IMR-90 (cell line): ENCODE measurements at regions of chr5 and their contacts with region 1.

Region 1: GRCh38 chr5:76256116-76256889 is 146.8 kb upstream of the IQGAP2 start:
- DNase-seq: peak; percentile 66
- ATAC-seq: peak; percentile 100
- H3K4me3 ChIP-seq: no peak overlapping the region
- H3K27ac ChIP-seq: no peak overlapping the region
- H3K4me1 ChIP-seq: no peaks in the 10 kb centered on the region
- H3K27me3 ChIP-seq: peaks cover 2% of the 10 kb centered on the region; the same call in 1 of the 2 replicates
- CTCF ChIP-seq: peak; percentile 65
- POLR2A ChIP-seq: no peak
- RAD21 ChIP-seq: peak; percentile 74

Region 2: GRCh38 chr5:74927336-74927735 is 1329.0 kb before region 1 on chr5:
- CTCF ChIA-PET with region 1: no interaction called
- POLR2A ChIA-PET with region 1: no interaction called
- dilution Hi-C with region 1: no loop called
- in situ Hi-C with region 1: no loop called
- intact Hi-C with region 1: loop called (anchors 5 kb)
- DNase-seq: no peak
- ATAC-seq: no peak
- H3K4me3 ChIP-seq: no peak overlapping the region
- H3K27ac ChIP-seq: no peak overlapping the region
- H3K4me1 ChIP-seq: peaks cover 3% of the 10 kb centered on the region
- H3K27me3 ChIP-seq: no peaks in the 10 kb centered on the region
- CTCF ChIP-seq: no peak
- POLR2A ChIP-seq: no peak
- RAD21 ChIP-seq: no peak

Region 3: GRCh38 chr5:75734913-75735789 is 521.2 kb before region 1 on chr5:
- CTCF ChIA-PET with region 1: no interaction called
- POLR2A ChIA-PET with region 1: no interaction called
- dilution Hi-C with region 1: no loop called
- in situ Hi-C with region 1: no loop called
- intact Hi-C with region 1: loop called (anchors 1 kb)
- DNase-seq: peak; percentile 4
- ATAC-seq: no peak
- H3K4me3 ChIP-seq: no peak overlapping the region
- H3K27ac ChIP-seq: no peak overlapping the region
- H3K4me1 ChIP-seq: no peaks in the 10 kb centered on the region
- H3K27me3 ChIP-seq: no peaks in the 10 kb centered on the region; the same call in 1 of the 2 replicates
- CTCF ChIP-seq: peak; percentile 18; the same call in 1 of the 2 replicates
- POLR2A ChIP-seq: no peak
- RAD21 ChIP-seq: peak; percentile 29; the same call in 1 of the 2 replicates

Region 4: DNA sequence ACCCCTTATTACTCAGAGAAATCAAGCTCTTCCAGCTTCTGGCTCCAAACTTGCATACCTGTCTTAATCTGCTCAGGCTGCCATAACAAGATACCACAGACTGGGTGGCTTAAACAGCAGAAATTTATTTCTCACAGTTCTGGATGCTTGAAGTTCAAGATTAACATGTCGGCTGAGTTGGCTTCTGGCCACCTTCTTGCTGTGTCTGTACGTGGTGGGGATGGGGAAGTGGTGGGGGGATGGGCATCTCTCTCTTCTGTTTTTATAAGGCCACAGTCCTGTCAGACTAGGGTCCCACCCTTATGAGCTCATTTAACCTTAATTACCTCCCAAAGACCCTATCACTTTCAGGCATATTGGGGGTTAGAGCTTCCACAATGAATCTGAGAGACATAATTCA is 32.6 kb before region 1 on chr5:
- CTCF ChIA-PET with region 1: no interaction called
- POLR2A ChIA-PET with region 1: no interaction called
- dilution Hi-C with region 1: no loop called
- in situ Hi-C with region 1: no loop called
- intact Hi-C with region 1: no loop called
- DNase-seq: no peak
- ATAC-seq: no peak
- H3K4me3 ChIP-seq: no peak overlapping the region
- H3K27ac ChIP-seq: no peak overlapping the region
- H3K4me1 ChIP-seq: no peaks in the 10 kb centered on the region
- H3K27me3 ChIP-seq: no peaks in the 10 kb centered on the region
- CTCF ChIP-seq: no peak
- POLR2A ChIP-seq: no peak
- RAD21 ChIP-seq: no peak

Region 5: GRCh38 chr5:76457674-76458485 is 201.6 kb after region 1 on chr5:
- CTCF ChIA-PET with region 1: no interaction called
- POLR2A ChIA-PET with region 1: no interaction called
- dilution Hi-C with region 1: no loop called
- in situ Hi-C with region 1: no loop called
- intact Hi-C with region 1: no loop called
- DNase-seq: no peak
- ATAC-seq: no peak
- H3K4me3 ChIP-seq: no peak overlapping the region
- H3K27ac ChIP-seq: no peak overlapping the region
- H3K4me1 ChIP-seq: no peaks in the 10 kb centered on the region
- H3K27me3 ChIP-seq: no peaks in the 10 kb centered on the region
- CTCF ChIP-seq: no peak
- POLR2A ChIP-seq: no peak
- RAD21 ChIP-seq: no peak